BJ (cell line): ENCODE measurements at regions of chr12 and their contacts with region 1.

Region 1: GRCh38 chr12:27176787-27177186 is 67.3 kb upstream of the STK38L start:
- DNase-seq: no peak
- H3K4me3 ChIP-seq: no peak overlapping the region
- H3K27me3 ChIP-seq: no peaks in the 10 kb centered on the region
- CTCF ChIP-seq: no peak

Region 2: GRCh38 chr12:27151479-27151878 is 25.3 kb before region 1 on chr12:
- CTCF ChIA-PET with region 1: no interaction called
- POLR2A ChIA-PET with region 1: no interaction called
- DNase-seq: no peak
- H3K4me3 ChIP-seq: no peak overlapping the region
- H3K27me3 ChIP-seq: no peaks in the 10 kb centered on the region
- CTCF ChIP-seq: no peak

Region 3: DNA sequence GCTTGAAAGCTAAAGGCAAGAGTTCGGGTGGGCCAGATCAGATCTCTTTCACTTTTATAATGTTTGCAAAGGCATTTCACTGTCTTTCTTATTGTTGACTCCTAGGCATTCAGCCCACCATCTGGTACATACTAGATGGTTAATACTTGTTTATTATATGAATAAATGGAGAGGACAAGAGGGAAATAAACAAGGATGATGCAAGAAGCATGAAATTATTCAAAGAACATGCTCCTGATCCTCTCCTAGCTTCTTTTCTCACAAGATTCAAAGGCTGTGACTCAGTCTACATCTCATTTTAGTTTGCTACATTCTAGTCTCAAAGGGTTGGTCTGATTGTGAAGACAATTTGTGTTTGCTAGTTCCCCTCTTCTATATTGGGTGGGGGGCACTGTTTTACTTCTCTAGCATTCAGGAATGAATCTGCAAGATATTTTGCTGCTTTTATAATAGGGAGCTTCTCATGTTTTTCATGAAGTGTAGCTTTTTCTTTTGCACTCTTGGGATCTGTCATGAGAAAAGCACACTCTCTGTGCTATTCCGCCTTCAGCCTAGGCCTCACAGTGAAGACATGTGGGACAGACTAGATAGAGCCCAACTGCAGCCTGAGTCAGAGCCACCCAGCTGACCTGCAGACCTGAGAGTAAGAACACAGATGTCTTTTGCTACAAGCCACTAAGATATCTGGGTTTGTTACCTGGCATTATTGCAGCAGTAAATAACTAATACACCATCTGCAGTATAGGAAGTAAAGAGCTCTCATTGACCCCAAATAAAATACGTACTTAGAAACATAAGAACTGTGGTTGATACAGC is 730.1 kb after region 1 on chr12:
- CTCF ChIA-PET with region 1: no interaction called
- POLR2A ChIA-PET with region 1: interaction called, 17 read pairs
- DNase-seq: peak; percentile 57
- H3K4me3 ChIP-seq: no peak overlapping the region
- H3K27me3 ChIP-seq: no peaks in the 10 kb centered on the region
- CTCF ChIP-seq: no peak